ENCODE measurements at regions of chr12 and their contacts with region 1.

Region 1: GRCh38 chr12:90064852-90065801 is 356.5 kb upstream of the ATP2B1 start:
- DNase-seq: no peak

Region 2: GRCh38 chr12:89825591-89826449 is 239.3 kb before region 1 on chr12:
- intact Hi-C with region 1: no loop called
- DNase-seq: no peak

Region 3: GRCh38 chr12:90010089-90010488 is 55.0 kb before region 1 on chr12:
- intact Hi-C with region 1: no loop called
- DNase-seq: no peak

Region 4: DNA sequence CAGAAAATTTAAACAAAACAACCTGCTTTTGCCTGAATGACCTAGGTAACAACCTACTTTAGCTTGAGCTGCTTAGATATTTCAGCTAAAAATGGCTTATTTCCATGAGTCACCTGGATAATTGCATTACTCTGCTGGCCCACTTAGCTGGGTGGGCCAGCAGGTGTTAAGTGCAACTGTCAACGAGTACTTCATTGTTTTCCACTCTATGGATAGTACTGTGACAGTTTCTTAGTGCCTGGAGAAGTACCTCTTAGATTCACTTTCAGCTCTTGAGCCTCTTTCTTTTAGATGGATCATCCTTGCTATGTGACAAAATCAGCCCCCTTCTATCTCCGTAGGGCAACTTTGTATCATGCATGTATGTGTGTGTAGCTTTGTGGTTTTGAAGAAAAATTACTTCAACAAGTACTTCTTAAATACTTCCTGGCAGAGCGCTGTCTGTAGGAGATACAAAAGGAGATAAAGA is 11.8 kb after region 1 on chr12:
- intact Hi-C with region 1: loop called in 1 of 2 experiments (anchors 1 kb)
- DNase-seq: no peak

Region 5: GRCh38 chr12:90280564-90281058 is 215.5 kb after region 1 on chr12:
- intact Hi-C with region 1: no loop called
- DNase-seq: no peak

Measured in posterior vena cava (tissue), 2 donors.